ENCODE measurements at regions of chr11 and their contacts with region 1.

Region 1: GRCh38 chr11:45371251-45372115 is 85.3 kb upstream of the SYT13 start:
- DNase-seq: peak; percentile 93
- ATAC-seq: peak; percentile 91
- H3K4me3 Mint-ChIP-seq: peak overlapping the region; percentile 65
- H3K27ac Mint-ChIP-seq: no peak overlapping the region
- H3K4me1 Mint-ChIP-seq: peaks cover 16% of the 10 kb centered on the region
- H3K27me3 Mint-ChIP-seq: peaks cover 13% of the 10 kb centered on the region
- CTCF ChIP-seq: peak; percentile 93

Region 2: GRCh38 chr11:45322891-45323600 is 48.4 kb before region 1 on chr11:
- CTCF ChIA-PET with region 1: no interaction called
- POLR2A ChIA-PET with region 1: no interaction called
- DNase-seq: no peak
- ATAC-seq: no peak
- H3K4me3 Mint-ChIP-seq: no peak overlapping the region
- H3K27ac Mint-ChIP-seq: no peak overlapping the region
- H3K4me1 Mint-ChIP-seq: no peaks in the 10 kb centered on the region
- H3K27me3 Mint-ChIP-seq: peaks cover 26% of the 10 kb centered on the region
- CTCF ChIP-seq: no peak

Region 3: GRCh38 chr11:45354976-45355705 is 16.3 kb before region 1 on chr11:
- CTCF ChIA-PET with region 1: interaction called, 35 read pairs
- POLR2A ChIA-PET with region 1: no interaction called
- DNase-seq: peak; percentile 86
- ATAC-seq: peak; percentile 92
- H3K4me3 Mint-ChIP-seq: peak overlapping the region; percentile 71
- H3K27ac Mint-ChIP-seq: peak overlapping the region; percentile 59
- H3K4me1 Mint-ChIP-seq: peaks cover 46% of the 10 kb centered on the region
- H3K27me3 Mint-ChIP-seq: peaks cover 9% of the 10 kb centered on the region; the same call in 1 of the 2 replicates
- CTCF ChIP-seq: no peak

Region 4: GRCh38 chr11:45411228-45411946 is 39.9 kb after region 1 on chr11:
- CTCF ChIA-PET with region 1: interaction called, 14 read pairs
- POLR2A ChIA-PET with region 1: interaction called, 3 read pairs
- DNase-seq: no peak
- ATAC-seq: peak; percentile 17
- H3K4me3 Mint-ChIP-seq: peak overlapping the region; percentile 57
- H3K27ac Mint-ChIP-seq: peak overlapping the region; percentile 88
- H3K4me1 Mint-ChIP-seq: peaks cover 52% of the 10 kb centered on the region
- H3K27me3 Mint-ChIP-seq: peaks cover 6% of the 10 kb centered on the region; the same call in 1 of the 2 replicates
- CTCF ChIP-seq: no peak

Region 5: DNA sequence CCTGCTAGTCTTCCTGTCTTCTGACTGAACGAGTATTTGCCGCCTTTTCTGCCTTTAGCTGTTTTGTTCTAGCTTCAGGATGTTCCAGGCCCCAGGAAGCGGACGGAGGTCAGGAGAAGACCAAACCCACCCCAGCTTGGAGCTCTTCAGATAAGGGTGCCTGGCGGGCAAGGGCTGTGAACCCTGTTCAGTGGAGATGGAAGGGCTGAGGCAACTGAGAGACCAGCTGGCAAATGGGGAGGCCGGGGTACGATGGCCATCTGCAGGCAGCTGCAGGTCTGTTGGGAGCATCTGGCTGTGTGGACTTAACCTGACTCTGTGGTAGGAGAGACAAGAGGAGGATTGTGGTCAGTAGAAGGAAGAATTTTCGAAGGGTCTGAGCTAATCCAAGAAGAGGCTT is 198.3 kb after region 1 on chr11:
- CTCF ChIA-PET with region 1: interaction called, 13 read pairs
- POLR2A ChIA-PET with region 1: no interaction called
- DNase-seq: no peak
- ATAC-seq: no peak
- H3K4me3 Mint-ChIP-seq: no peak overlapping the region
- H3K27ac Mint-ChIP-seq: no peak overlapping the region
- H3K4me1 Mint-ChIP-seq: no peaks in the 10 kb centered on the region
- H3K27me3 Mint-ChIP-seq: no peaks in the 10 kb centered on the region; the same call in 1 of the 2 replicates
- CTCF ChIP-seq: no peak

Region 6: GRCh38 chr11:45617871-45618601 is 246.6 kb after region 1 on chr11:
- CTCF ChIA-PET with region 1: interaction called, 10 read pairs
- POLR2A ChIA-PET with region 1: no interaction called
- DNase-seq: no peak
- ATAC-seq: peak; percentile 57
- H3K4me3 Mint-ChIP-seq: no peak overlapping the region
- H3K27ac Mint-ChIP-seq: no peak overlapping the region
- H3K4me1 Mint-ChIP-seq: peaks cover 15% of the 10 kb centered on the region
- H3K27me3 Mint-ChIP-seq: peaks cover 3% of the 10 kb centered on the region; the same call in 1 of the 2 replicates
- CTCF ChIP-seq: no peak

Region 7: DNA sequence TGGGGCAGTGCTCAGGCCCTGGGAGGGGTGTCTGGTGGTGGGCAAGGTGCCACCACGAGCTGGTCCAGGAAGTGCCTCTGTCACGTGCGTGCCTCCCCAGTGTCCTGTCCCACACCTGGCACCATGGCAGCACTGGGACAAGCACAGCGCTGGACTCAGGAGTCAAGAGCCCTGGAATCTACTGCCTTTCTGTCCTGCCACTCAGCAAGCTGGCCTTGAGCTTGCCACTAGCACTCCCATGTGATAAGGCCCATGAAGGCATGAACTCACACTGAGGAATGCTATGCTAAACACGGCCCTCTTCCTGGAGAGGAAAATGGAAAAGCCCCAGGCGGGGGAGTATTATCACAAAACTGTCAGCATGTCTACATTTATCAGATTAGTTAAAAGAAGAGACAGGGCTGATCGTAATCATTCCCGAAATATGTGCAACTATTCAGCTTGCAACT is 382.8 kb after region 1 on chr11:
- CTCF ChIA-PET with region 1: interaction called, 23 read pairs
- POLR2A ChIA-PET with region 1: no interaction called
- DNase-seq: no peak
- ATAC-seq: no peak
- H3K4me3 Mint-ChIP-seq: no peak overlapping the region
- H3K27ac Mint-ChIP-seq: no peak overlapping the region
- H3K4me1 Mint-ChIP-seq: peaks cover 40% of the 10 kb centered on the region
- H3K27me3 Mint-ChIP-seq: no peaks in the 10 kb centered on the region; the same call in 1 of the 2 replicates
- CTCF ChIP-seq: no peak

Measured in WTC11 (cell line).